Calu3 (cell line): ENCODE measurements at regions of chr18 and their contacts with region 1.

Region 1: GRCh38 chr18:13216092-13216582 is 2.4 kb upstream of the LDLRAD4 start:
- DNase-seq: peak; percentile 55
- H3K4me3 Mint-ChIP-seq: peak overlapping the region; percentile 13
- H3K27ac Mint-ChIP-seq: no peak overlapping the region
- H3K4me1 Mint-ChIP-seq: no peaks in the 10 kb centered on the region
- H3K27me3 Mint-ChIP-seq: peaks cover 88% of the 10 kb centered on the region
- CTCF ChIP-seq: peak; percentile 58

Region 2: DNA sequence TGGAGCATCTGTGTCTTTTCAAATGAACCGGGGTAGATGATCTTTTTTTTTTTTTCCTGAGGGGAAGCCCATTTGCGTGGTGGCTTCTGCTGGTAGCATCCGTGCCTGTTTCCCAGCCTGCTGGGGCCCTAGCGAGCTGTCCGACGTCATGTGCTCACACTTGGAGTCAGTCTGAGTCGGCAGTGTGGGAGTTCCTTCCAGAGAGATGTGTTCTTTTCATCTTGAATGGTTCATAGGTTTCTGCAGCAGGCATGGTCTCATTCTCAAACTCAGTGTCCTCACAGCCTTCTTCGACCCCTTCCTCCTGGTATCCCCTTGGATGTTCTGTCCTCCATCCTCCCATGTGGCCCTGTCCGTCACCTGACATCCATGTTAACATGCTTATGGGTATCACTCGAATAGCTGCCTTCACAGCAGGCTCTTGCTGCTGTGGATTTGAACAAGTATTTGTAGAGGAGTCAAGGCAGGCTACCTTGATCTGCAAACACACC is 53.4 kb after region 1 on chr18:
- CTCF ChIA-PET with region 1: no interaction called
- intact Hi-C with region 1: loop called (anchors 10 kb)
- DNase-seq: no peak
- H3K4me3 Mint-ChIP-seq: no peak overlapping the region
- H3K27ac Mint-ChIP-seq: no peak overlapping the region
- H3K4me1 Mint-ChIP-seq: peaks cover 8% of the 10 kb centered on the region
- H3K27me3 Mint-ChIP-seq: peaks cover 74% of the 10 kb centered on the region
- CTCF ChIP-seq: no peak

Region 3: GRCh38 chr18:13381944-13382365 is 165.8 kb after region 1 on chr18:
- CTCF ChIA-PET with region 1: no interaction called
- intact Hi-C with region 1: loop called (anchors 10 kb)
- DNase-seq: peak; percentile 53
- H3K4me3 Mint-ChIP-seq: peak overlapping the region; percentile 23
- H3K27ac Mint-ChIP-seq: peak overlapping the region; percentile 68
- H3K4me1 Mint-ChIP-seq: peaks cover 17% of the 10 kb centered on the region
- H3K27me3 Mint-ChIP-seq: no peaks in the 10 kb centered on the region
- CTCF ChIP-seq: no peak

Region 4: GRCh38 chr18:13629841-13630715 is 413.9 kb after region 1 on chr18:
- CTCF ChIA-PET with region 1: no interaction called
- intact Hi-C with region 1: loop called (anchors 10 kb)
- DNase-seq: peak; percentile 54
- H3K4me3 Mint-ChIP-seq: no peak overlapping the region
- H3K27ac Mint-ChIP-seq: no peak overlapping the region
- H3K4me1 Mint-ChIP-seq: no peaks in the 10 kb centered on the region
- H3K27me3 Mint-ChIP-seq: peaks cover 26% of the 10 kb centered on the region
- CTCF ChIP-seq: peak; percentile 52

Region 5: GRCh38 chr18:13800505-13801259 is 584.5 kb after region 1 on chr18:
- CTCF ChIA-PET with region 1: no interaction called
- intact Hi-C with region 1: loop called (anchors 2 kb)
- DNase-seq: peak; percentile 90
- H3K4me3 Mint-ChIP-seq: peak overlapping the region; percentile 71
- H3K27ac Mint-ChIP-seq: peak overlapping the region; percentile 50
- H3K4me1 Mint-ChIP-seq: peaks cover 40% of the 10 kb centered on the region
- H3K27me3 Mint-ChIP-seq: no peaks in the 10 kb centered on the region
- CTCF ChIP-seq: peak; percentile 47